Panc1 (cell line): ENCODE measurements at regions of chr10 and their contacts with region 1.

Region 1: GRCh38 chr10:117216611-117217195 is 19.4 kb downstream of the KCNK18 start:
- DNase-seq: peak; percentile 51
- ATAC-seq: peak; percentile 89
- H3K4me3 ChIP-seq: peak overlapping the region; percentile 53 to 67
- H3K27ac ChIP-seq: no peak overlapping the region
- H3K4me1 ChIP-seq: peaks cover 8% of the 10 kb centered on the region
- H3K27me3 ChIP-seq: peaks cover 34% of the 10 kb centered on the region
- CTCF ChIP-seq: peak; percentile 100

Region 2: DNA sequence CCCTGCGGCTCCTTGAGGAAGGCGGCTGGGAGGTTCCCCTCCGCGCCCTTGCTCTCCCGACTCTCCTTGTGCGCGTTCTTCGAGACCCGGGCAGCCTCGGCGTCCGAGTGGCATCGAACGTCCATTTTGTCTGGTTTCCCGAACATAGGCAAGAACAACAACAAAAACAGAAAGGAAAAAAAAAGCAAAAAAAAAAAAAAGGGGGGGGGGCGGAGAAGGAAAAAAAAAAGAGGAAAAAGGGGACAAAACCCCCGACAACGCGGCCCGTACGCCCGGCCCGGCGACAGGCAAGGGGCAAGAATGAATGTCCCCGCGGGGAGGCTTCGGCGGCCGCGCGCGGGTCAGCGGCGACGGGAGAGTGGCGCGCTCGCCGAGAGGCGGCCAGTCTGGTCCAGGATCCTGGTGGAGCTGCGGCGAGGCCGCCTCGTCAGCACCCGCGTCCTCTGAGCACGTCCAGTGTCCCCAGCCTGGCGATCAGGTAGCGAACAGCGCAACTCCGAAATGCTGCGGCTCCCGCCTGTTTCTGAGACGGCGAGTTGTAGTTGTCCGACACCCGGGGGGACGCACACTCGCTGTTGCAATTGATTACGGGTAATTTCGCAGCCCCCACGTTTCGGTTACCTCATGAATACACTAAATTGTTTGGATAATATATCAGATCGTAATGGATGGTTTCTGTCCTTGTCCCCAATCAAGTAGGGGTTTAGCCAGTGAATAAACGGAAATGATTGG is 78.6 kb before region 1 on chr10 and contains the start of gene VAX1:
- CTCF ChIA-PET with region 1: interaction called, 15 read pairs
- POLR2A ChIA-PET with region 1: no interaction called
- in situ Hi-C with region 1: no loop called
- intact Hi-C with region 1: no loop called
- DNase-seq: no peak
- ATAC-seq: peak; percentile 52
- H3K4me3 ChIP-seq: peak within 1 kb of the TSS; percentile 56 to 68
- H3K27ac ChIP-seq: peak within 1 kb of the TSS; percentile 93
- H3K4me1 ChIP-seq: peaks cover 10% of the 10 kb centered on the region
- H3K27me3 ChIP-seq: peaks cover 4% of the 10 kb centered on the region; the same call in 1 of the 2 replicates
- CTCF ChIP-seq: no peak
- total RNA-seq, gene VAX1: 4.6 TPM

Region 3: GRCh38 chr10:117320050-117320665 is 103.5 kb after region 1 on chr10:
- CTCF ChIA-PET with region 1: interaction called, 42 read pairs
- POLR2A ChIA-PET with region 1: interaction called, 3 read pairs
- in situ Hi-C with region 1: no loop called
- intact Hi-C with region 1: loop called (anchors 2 kb)
- DNase-seq: no peak
- ATAC-seq: no peak
- H3K4me3 ChIP-seq: no peak overlapping the region
- H3K27ac ChIP-seq: no peak overlapping the region
- H3K4me1 ChIP-seq: 0 out of 2 replicates have a peak, but pooled peaks cover 2% of the 10 kb centered on the region
- H3K27me3 ChIP-seq: no peaks in the 10 kb centered on the region
- CTCF ChIP-seq: peak; percentile 74; the same call in 1 of the 2 replicates

Region 4: GRCh38 chr10:117429643-117430265 is 213.1 kb after region 1 on chr10:
- CTCF ChIA-PET with region 1: interaction called, 10 read pairs
- POLR2A ChIA-PET with region 1: no interaction called
- in situ Hi-C with region 1: no loop called
- intact Hi-C with region 1: no loop called
- DNase-seq: no peak
- ATAC-seq: no peak
- H3K4me3 ChIP-seq: no peak overlapping the region
- H3K27ac ChIP-seq: no peak overlapping the region
- H3K4me1 ChIP-seq: no peaks in the 10 kb centered on the region
- H3K27me3 ChIP-seq: no peaks in the 10 kb centered on the region; the same call in 1 of the 2 replicates
- CTCF ChIP-seq: no peak

Region 5: DNA sequence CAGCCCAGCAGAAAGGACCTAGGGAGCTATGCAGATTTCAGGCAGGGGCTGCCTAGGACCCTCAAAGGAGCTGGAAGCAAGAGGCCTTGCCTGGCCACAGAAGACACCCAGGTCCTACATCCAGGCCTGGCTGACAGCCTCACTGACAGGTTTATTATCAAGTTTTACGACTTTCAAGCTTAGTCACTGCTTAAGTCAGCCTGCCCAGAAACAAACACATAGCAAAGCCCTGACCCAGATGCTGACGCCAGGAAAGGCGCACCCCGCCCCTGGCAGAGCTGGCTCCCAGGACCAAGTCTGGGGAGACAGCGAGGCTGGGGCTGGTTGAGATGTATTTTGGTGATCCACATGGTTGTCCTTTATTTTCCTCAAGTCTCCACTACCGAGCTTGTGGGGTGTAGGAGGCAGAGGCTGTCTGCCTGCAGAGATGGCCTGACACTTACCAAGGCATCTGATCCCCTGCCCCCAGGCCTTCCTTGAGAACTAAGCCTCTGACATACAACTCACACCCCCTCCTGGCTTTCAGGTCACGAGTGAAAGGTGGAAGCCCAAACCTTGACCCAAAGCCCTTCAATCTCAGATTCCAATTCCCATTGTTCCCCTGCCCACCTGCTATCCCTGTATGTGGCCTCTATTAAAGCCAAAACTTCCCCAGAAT is 245.2 kb after region 1 on chr10:
- CTCF ChIA-PET with region 1: no interaction called
- POLR2A ChIA-PET with region 1: no interaction called
- in situ Hi-C with region 1: no loop called
- intact Hi-C with region 1: loop called (anchors 5 kb)
- DNase-seq: peak; percentile 80
- ATAC-seq: peak; percentile 95
- H3K4me3 ChIP-seq: no peak overlapping the region
- H3K27ac ChIP-seq: 0 out of 2 replicates have a peak overlapping the region, but pooled peaks have one; percentile 15
- H3K4me1 ChIP-seq: peaks cover 16% of the 10 kb centered on the region
- H3K27me3 ChIP-seq: no peaks in the 10 kb centered on the region
- CTCF ChIP-seq: no peak